ENCODE measurements at regions of chr21 and their contacts with region 1.

Region 1: GRCh38 chr21:17679002-17679600 is 66.4 kb upstream of the BTG3 start:
- DNase-seq: peak; percentile 60

Region 2: GRCh38 chr21:17925000-17925610 is 246.0 kb after region 1 on chr21:
- in situ Hi-C with region 1: loop called (anchors 25 kb)
- DNase-seq: peak; percentile 63

Measured in KBM-7 (cell line).